B cell (primary cell): ENCODE measurements at regions of chr3 and their contacts with region 1.

Region 1: GRCh38 chr3:32143849-32144757 is 37.7 kb downstream of the GPD1L start:
- DNase-seq: peak; percentile 78
- ATAC-seq: peak; percentile 51
- H3K4me3 ChIP-seq: no peak overlapping the region
- H3K4me3 Mint-ChIP-seq: no peak overlapping the region
- H3K27ac ChIP-seq: no peak overlapping the region
- H3K27ac Mint-ChIP-seq: peak overlapping the region; percentile 52
- H3K4me1 ChIP-seq: peaks cover 12 to 18% of the 10 kb centered on the region in 2 donors
- H3K4me1 Mint-ChIP-seq: peaks cover 21% of the 10 kb centered on the region
- H3K27me3 ChIP-seq: no peaks in the 10 kb centered on the region
- H3K27me3 Mint-ChIP-seq: no peaks in the 10 kb centered on the region
- CTCF ChIP-seq: peak; percentile 83

Region 2: GRCh38 chr3:31610700-31611275 is 533.3 kb before region 1 on chr3:
- CTCF ChIA-PET with region 1: no interaction called
- POLR2A ChIA-PET with region 1: no interaction called
- intact Hi-C with region 1: loop called (anchors 2 kb)
- DNase-seq: peak; percentile 34
- ATAC-seq: no peak
- H3K4me3 ChIP-seq: no peak overlapping the region
- H3K4me3 Mint-ChIP-seq: no peak overlapping the region
- H3K27ac ChIP-seq: no peak overlapping the region
- H3K27ac Mint-ChIP-seq: no peak overlapping the region
- H3K4me1 ChIP-seq: no peaks in the 10 kb centered on the region
- H3K4me1 Mint-ChIP-seq: peaks cover 19% of the 10 kb centered on the region
- H3K27me3 ChIP-seq: no peaks in the 10 kb centered on the region
- H3K27me3 Mint-ChIP-seq: no peaks in the 10 kb centered on the region
- CTCF ChIP-seq: peak; percentile 67

Region 3: GRCh38 chr3:31858439-31858838 is 285.7 kb before region 1 on chr3:
- CTCF ChIA-PET with region 1: interaction called, 21 read pairs
- POLR2A ChIA-PET with region 1: no interaction called
- intact Hi-C with region 1: loop called (anchors 1 kb)
- DNase-seq: peak; percentile 48
- ATAC-seq: peak; percentile 66
- H3K4me3 ChIP-seq: no peak overlapping the region
- H3K4me3 Mint-ChIP-seq: no peak overlapping the region
- H3K27ac ChIP-seq: peak overlapping the region in 1 of 2 donors; percentile 34
- H3K27ac Mint-ChIP-seq: peak overlapping the region; percentile 53
- H3K4me1 ChIP-seq: peaks cover 49 to 56% of the 10 kb centered on the region in 2 donors
- H3K4me1 Mint-ChIP-seq: peaks cover 65% of the 10 kb centered on the region
- H3K27me3 ChIP-seq: no peaks in the 10 kb centered on the region
- H3K27me3 Mint-ChIP-seq: no peaks in the 10 kb centered on the region
- CTCF ChIP-seq: peak; percentile 59

Region 4: DNA sequence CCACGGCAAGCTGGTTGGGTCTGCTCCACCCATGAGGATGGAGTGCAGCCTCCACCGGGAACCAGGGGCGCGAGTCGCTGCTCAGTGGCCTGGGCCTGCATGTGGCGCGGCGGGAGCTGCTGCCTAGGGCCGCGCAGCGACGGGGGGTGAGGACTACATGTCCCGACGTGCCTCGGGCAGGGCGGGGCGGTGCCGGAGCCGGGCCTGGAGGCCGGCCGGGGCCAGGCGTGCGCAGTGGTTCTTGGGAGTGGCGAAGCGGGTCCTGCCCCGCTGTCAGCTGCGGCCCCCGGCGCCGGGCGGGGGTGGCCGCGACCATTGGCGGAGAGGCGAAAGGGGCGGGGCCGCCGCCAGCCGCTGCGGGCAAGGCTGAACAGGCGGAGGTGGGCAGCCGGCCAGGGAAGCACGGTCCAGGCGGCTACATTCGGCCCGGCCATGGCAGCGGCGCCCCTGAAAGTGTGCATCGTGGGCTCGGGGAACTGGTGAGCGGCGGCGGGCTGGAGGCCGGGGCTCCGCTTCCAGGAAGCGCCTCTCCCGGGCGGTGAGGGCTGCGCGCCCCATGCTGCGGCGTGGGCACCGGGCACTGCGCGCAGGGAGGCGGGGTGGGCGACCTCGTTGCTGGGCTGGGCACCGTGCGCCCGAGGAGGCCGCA is 37.7 kb before region 1 on chr3 and contains the start of gene GPD1L:
- CTCF ChIA-PET with region 1: interaction called, 4 read pairs
- POLR2A ChIA-PET with region 1: no interaction called
- intact Hi-C with region 1: loop called (anchors 1 kb)
- DNase-seq: peak; percentile 94
- ATAC-seq: peak; percentile 99
- H3K4me3 ChIP-seq: peak within 1 kb of the TSS; percentile 46 to 79 (median 75)
- H3K4me3 Mint-ChIP-seq: peak within 1 kb of the TSS; percentile 94
- H3K27ac ChIP-seq: no peak within 1 kb of the TSS
- H3K27ac Mint-ChIP-seq: peak within 1 kb of the TSS; percentile 88
- H3K4me1 ChIP-seq: peaks cover 11 to 14% of the 10 kb centered on the region in 2 donors
- H3K4me1 Mint-ChIP-seq: peaks cover 15% of the 10 kb centered on the region
- H3K27me3 ChIP-seq: no peaks in the 10 kb centered on the region
- H3K27me3 Mint-ChIP-seq: no peaks in the 10 kb centered on the region
- CTCF ChIP-seq: no peak
- total RNA-seq, gene GPD1L: 9.3 TPM in 2 replicates

Region 5: GRCh38 chr3:32154205-32154579 is 10.1 kb after region 1 on chr3:
- CTCF ChIA-PET with region 1: interaction called, 10 read pairs
- POLR2A ChIA-PET with region 1: no interaction called
- intact Hi-C with region 1: no loop called
- DNase-seq: no peak
- ATAC-seq: no peak
- H3K4me3 ChIP-seq: no peak overlapping the region
- H3K4me3 Mint-ChIP-seq: no peak overlapping the region
- H3K27ac ChIP-seq: no peak overlapping the region
- H3K27ac Mint-ChIP-seq: no peak overlapping the region
- H3K4me1 ChIP-seq: no peaks in the 10 kb centered on the region
- H3K4me1 Mint-ChIP-seq: no peaks in the 10 kb centered on the region
- H3K27me3 ChIP-seq: no peaks in the 10 kb centered on the region
- H3K27me3 Mint-ChIP-seq: no peaks in the 10 kb centered on the region
- CTCF ChIP-seq: no peak